CD14-positive monocyte (primary cell): ENCODE measurements at regions of chrX and their contacts with region 1.

Region 1: GRCh38 chrX:110172215-110172614 is 145.7 kb downstream of the AMMECR1 start:
- DNase-seq: peak in 1 of 3 donors; percentile 7
- H3K4me3 ChIP-seq: no peak overlapping the region
- H3K4me3 Mint-ChIP-seq: no peak overlapping the region
- H3K27ac ChIP-seq: peak overlapping the region in 1 of 2 donors; percentile 11
- H3K27ac Mint-ChIP-seq: peak overlapping the region in 3 of 7 donors; percentile 63 to 79 (median 67)
- H3K4me1 ChIP-seq: peaks cover 10 to 12% of the 10 kb centered on the region in 2 donors
- H3K4me1 Mint-ChIP-seq: peaks cover 34% of the 10 kb centered on the region
- H3K27me3 ChIP-seq: no peaks in the 10 kb centered on the region
- H3K27me3 Mint-ChIP-seq: peaks cover 0 to 4% (median 2%) of the 10 kb centered on the region in 3 donors
- CTCF ChIP-seq: no peak

Region 2: DNA sequence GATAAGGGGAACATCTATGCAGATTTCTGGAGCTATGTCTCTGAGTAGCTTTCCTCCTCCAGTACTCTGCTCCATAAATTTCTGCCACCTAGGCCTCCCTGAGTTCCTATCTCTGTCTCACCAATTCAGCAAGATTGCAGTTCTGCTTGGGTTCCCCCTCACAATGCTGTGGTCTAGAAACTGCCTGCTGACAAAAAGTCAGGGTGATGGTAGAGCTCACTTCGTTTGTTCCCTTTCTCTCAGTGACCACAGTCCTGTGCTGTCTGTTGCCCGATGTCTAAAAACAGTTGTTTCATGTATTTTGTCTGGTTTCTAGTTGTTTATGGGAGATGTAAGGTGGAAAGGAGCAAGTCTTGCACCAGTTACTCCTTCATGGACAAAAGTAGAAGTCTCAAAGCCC is 104.6 kb after region 1 on chrX:
- intact Hi-C with region 1: loop called in 1 of 2 experiments (anchors 10 kb)
- DNase-seq: no peak
- H3K4me3 ChIP-seq: no peak overlapping the region
- H3K4me3 Mint-ChIP-seq: no peak overlapping the region
- H3K27ac ChIP-seq: no peak overlapping the region
- H3K27ac Mint-ChIP-seq: no peak overlapping the region
- H3K4me1 ChIP-seq: no peaks in the 10 kb centered on the region
- H3K4me1 Mint-ChIP-seq: peaks cover 11% of the 10 kb centered on the region
- H3K27me3 ChIP-seq: no peaks in the 10 kb centered on the region
- H3K27me3 Mint-ChIP-seq: peaks cover 0 to 7% (median 0%) of the 10 kb centered on the region in 3 donors
- CTCF ChIP-seq: no peak

Region 3: GRCh38 chrX:110341189-110342035 is 169.2 kb after region 1 on chrX:
- intact Hi-C with region 1: no loop called
- DNase-seq: no peak
- H3K4me3 ChIP-seq: no peak overlapping the region
- H3K4me3 Mint-ChIP-seq: no peak overlapping the region
- H3K27ac ChIP-seq: no peak overlapping the region
- H3K27ac Mint-ChIP-seq: no peak overlapping the region
- H3K4me1 ChIP-seq: no peaks in the 10 kb centered on the region
- H3K4me1 Mint-ChIP-seq: no peaks in the 10 kb centered on the region
- H3K27me3 ChIP-seq: no peaks in the 10 kb centered on the region
- H3K27me3 Mint-ChIP-seq: peaks cover 0 to 5% (median 1%) of the 10 kb centered on the region in 3 donors
- CTCF ChIP-seq: no peak

Region 4: GRCh38 chrX:111352424-111352823 is 1180.2 kb after region 1 on chrX:
- intact Hi-C with region 1: no loop called
- DNase-seq: no peak
- H3K4me3 ChIP-seq: no peak overlapping the region
- H3K4me3 Mint-ChIP-seq: no peak overlapping the region
- H3K27ac ChIP-seq: no peak overlapping the region
- H3K27ac Mint-ChIP-seq: no peak overlapping the region
- H3K4me1 ChIP-seq: no peaks in the 10 kb centered on the region
- H3K4me1 Mint-ChIP-seq: no peaks in the 10 kb centered on the region
- H3K27me3 ChIP-seq: no peaks in the 10 kb centered on the region
- H3K27me3 Mint-ChIP-seq: peaks cover 0 to 9% (median 0%) of the 10 kb centered on the region in 3 donors
- CTCF ChIP-seq: no peak